Heart left ventricle (tissue), 16 donors: ENCODE measurements at regions of chr3 and their contacts with region 1.

Region 1: GRCh38 chr3:124995460-124995994 is 60.3 kb downstream of the HEG1 start:
- DNase-seq: peak in 4 of 5 donors; percentile 35 to 73 (median 51)
- ATAC-seq: peak; percentile 53 to 76 (median 70)
- H3K4me3 ChIP-seq: no peak overlapping the region
- H3K27ac ChIP-seq: peak overlapping the region in 10 of 12 donors; percentile 8 to 74 (median 43)
- H3K4me1 ChIP-seq: peaks cover 5 to 80% (median 59%) of the 10 kb centered on the region in 12 donors
- H3K27me3 ChIP-seq: no peaks in the 10 kb centered on the region
- CTCF ChIP-seq: peak; percentile 56 to 84 (median 70)
- POLR2A ChIP-seq: no peak

Region 2: DNA sequence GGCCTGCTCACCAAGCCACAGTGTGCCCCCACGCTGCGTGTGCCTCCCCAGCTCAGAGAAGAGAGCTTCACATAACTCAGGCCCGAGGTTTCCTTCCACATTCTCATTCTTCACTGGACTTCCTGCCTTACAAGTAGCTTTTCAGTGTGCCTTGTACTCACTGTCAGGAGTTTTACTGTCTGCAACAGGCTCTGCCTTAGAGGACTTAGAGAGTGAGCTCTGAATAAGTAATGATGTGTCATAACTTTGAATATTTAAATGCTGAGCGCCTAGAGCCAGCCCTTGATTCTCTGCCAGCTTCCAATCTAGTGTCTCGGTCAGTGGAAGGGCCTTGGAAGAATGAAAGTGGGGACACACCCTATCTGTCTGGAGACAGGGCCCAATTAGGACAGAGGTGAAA is 150.1 kb before region 1 on chr3:
- intact Hi-C with region 1: no loop called
- DNase-seq: peak in 3 of 5 donors; percentile 40 to 68 (median 48)
- ATAC-seq: peak; percentile 63 to 86 (median 74)
- H3K4me3 ChIP-seq: no peak overlapping the region
- H3K27ac ChIP-seq: peak overlapping the region; percentile 9 to 82 (median 57)
- H3K4me1 ChIP-seq: peaks cover 3 to 49% (median 28%) of the 10 kb centered on the region in 12 donors
- H3K27me3 ChIP-seq: no peaks in the 10 kb centered on the region
- CTCF ChIP-seq: no peak
- POLR2A ChIP-seq: no peak

Region 3: GRCh38 chr3:124928333-124929202 is 67.0 kb before region 1 on chr3:
- intact Hi-C with region 1: loop called in 1 of 10 experiments (anchors 5 kb)
- DNase-seq: peak; percentile 50 to 79 (median 60)
- ATAC-seq: peak in 2 of 4 donors; percentile 68 to 76
- H3K4me3 ChIP-seq: no peak overlapping the region
- H3K27ac ChIP-seq: no peak overlapping the region
- H3K4me1 ChIP-seq: peaks cover 0 to 11% (median 0%) of the 10 kb centered on the region in 12 donors
- H3K27me3 ChIP-seq: no peaks in the 10 kb centered on the region
- CTCF ChIP-seq: peak; percentile 61 to 87 (median 75)
- POLR2A ChIP-seq: no peak

Region 4: GRCh38 chr3:125055913-125056745 is 60.6 kb after region 1 on chr3 and contains the start of gene HEG1:
- intact Hi-C with region 1: loop called in 8 of 10 experiments (anchors 2 to 10 kb)
- DNase-seq: peak; percentile 93 to 96 (median 94)
- ATAC-seq: peak; percentile 83 to 93 (median 90)
- H3K4me3 ChIP-seq: peak within 1 kb of the TSS; percentile 73 to 97 (median 88)
- H3K27ac ChIP-seq: peak within 1 kb of the TSS; percentile 82 to 99 (median 94)
- H3K4me1 ChIP-seq: peaks cover 11 to 67% (median 56%) of the 10 kb centered on the region in 12 donors
- H3K27me3 ChIP-seq: no peaks in the 10 kb centered on the region
- CTCF ChIP-seq: no peak
- POLR2A ChIP-seq: peak in 1 of 2 donors; percentile 74
- total RNA-seq, gene HEG1: 68.1 to 211 (median 121) TPM

Region 5: DNA sequence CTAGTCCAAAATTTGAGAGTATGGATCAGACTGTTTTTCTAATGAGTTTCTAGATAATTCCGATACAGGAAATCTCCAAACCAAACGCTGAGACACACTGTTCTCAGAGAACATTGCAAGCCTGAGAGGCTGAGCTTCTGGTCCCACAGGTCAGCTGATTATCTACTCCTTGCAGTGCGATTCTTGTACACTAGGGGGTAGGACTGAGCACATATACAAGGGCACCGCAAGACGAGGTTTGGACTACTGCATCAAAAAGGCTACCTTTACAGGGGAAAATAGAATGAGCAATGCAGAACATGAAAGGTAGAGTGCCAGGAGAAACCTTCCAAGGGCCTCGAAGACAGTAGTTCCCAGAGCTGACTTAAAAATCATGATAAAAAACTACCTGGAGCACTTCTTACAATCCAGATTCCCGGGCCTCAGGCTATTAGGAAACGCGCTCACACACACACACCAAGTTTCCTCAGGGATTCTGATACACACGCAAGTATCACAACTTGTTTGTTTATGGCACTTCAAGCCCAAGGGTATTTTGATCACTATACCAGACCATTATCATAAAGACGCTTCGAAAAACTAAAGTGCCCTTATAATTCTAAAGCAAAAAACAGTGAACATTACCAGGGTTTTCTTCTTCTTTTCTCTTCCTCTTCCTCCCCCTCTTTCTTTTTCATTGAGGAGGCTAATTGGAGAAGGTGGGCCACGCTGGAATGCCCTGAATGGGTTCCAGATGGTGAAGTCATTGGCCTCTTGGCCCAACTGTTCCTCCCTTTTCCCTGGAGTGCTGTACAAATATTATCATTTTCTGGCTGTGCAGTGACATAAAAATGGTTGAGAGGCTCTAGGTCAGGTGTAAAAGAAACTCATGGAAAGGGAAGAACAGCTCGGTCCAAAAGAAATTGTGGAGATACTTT is 155.3 kb after region 1 on chr3:
- intact Hi-C with region 1: loop called in 2 of 10 experiments (anchors 5 kb)
- DNase-seq: no peak
- ATAC-seq: no peak
- H3K4me3 ChIP-seq: no peak overlapping the region
- H3K27ac ChIP-seq: peak overlapping the region in 4 of 12 donors; percentile 1 to 53 (median 26)
- H3K4me1 ChIP-seq: peaks cover 0 to 71% (median 40%) of the 10 kb centered on the region in 12 donors
- H3K27me3 ChIP-seq: no peaks in the 10 kb centered on the region
- CTCF ChIP-seq: peak in 11 of 12 donors; percentile 17 to 49 (median 36)
- POLR2A ChIP-seq: no peak

Region 6: GRCh38 chr3:125374996-125375941 is 379.7 kb after region 1 on chr3 and contains the start of gene ZNF148:
- intact Hi-C with region 1: loop called in 2 of 10 experiments (anchors 5 to 10 kb)
- DNase-seq: peak; percentile 93 to 97 (median 95)
- ATAC-seq: peak; percentile 94 to 99 (median 99)
- H3K4me3 ChIP-seq: peak within 1 kb of the TSS; percentile 43 to 94 (median 84)
- H3K27ac ChIP-seq: peak within 1 kb of the TSS; percentile 80 to 97 (median 92)
- H3K4me1 ChIP-seq: peaks cover 0 to 35% (median 22%) of the 10 kb centered on the region in 12 donors
- H3K27me3 ChIP-seq: no peaks in the 10 kb centered on the region
- CTCF ChIP-seq: peak in 4 of 12 donors; percentile 9 to 37 (median 34)
- POLR2A ChIP-seq: peak in 1 of 2 donors; percentile 75
- total RNA-seq, gene ZNF148: 24.1 to 62.4 (median 40.2) TPM

Region 7: DNA sequence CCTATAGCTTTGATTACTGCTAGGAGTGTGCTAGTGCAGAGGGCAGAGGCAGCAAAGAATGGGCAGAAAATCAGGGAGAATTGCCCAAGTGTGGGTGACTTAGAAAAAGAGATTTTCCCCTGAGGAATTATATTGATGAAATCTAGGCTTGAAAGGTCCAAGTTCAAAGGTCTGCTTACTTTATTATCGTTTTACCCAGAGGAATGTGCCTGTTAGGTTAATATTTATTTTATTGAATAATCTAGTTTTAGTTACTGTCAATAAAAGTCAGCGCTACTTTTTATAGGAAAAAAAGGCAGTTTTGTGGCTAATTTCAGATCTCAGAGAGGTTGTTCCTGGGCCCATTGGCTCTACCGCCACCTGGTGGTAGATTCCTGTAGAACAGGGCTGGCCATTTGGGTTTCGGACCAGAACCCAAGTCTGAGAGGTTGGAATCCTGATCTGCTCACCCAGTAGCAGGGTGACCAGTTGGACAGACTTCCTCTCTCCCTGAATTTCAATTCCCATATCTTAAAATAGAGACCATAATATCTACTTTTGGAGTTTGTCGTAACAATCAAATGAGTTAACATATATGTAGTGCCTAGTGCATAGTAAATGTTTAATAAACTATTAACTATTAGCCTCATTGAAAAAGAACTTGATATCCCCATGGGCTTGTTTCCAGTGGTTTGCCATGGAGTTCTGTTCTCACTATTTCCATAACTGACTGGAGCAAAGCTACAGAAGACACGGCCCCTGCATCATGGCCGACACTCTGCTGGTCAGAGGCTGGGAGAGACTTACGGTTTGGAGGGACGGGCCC is 442.3 kb after region 1 on chr3:
- intact Hi-C with region 1: loop called (anchors 1 to 5 kb)
- DNase-seq: peak in 4 of 5 donors; percentile 30 to 36 (median 34)
- ATAC-seq: peak in 3 of 4 donors; percentile 36 to 56 (median 55)
- H3K4me3 ChIP-seq: no peak overlapping the region
- H3K27ac ChIP-seq: no peak overlapping the region
- H3K4me1 ChIP-seq: no peaks in the 10 kb centered on the region
- H3K27me3 ChIP-seq: no peaks in the 10 kb centered on the region
- CTCF ChIP-seq: peak; percentile 88 to 99 (median 96)
- POLR2A ChIP-seq: no peak